ENCODE measurements at regions of chr17 and their contacts with region 1.

Region 1: DNA sequence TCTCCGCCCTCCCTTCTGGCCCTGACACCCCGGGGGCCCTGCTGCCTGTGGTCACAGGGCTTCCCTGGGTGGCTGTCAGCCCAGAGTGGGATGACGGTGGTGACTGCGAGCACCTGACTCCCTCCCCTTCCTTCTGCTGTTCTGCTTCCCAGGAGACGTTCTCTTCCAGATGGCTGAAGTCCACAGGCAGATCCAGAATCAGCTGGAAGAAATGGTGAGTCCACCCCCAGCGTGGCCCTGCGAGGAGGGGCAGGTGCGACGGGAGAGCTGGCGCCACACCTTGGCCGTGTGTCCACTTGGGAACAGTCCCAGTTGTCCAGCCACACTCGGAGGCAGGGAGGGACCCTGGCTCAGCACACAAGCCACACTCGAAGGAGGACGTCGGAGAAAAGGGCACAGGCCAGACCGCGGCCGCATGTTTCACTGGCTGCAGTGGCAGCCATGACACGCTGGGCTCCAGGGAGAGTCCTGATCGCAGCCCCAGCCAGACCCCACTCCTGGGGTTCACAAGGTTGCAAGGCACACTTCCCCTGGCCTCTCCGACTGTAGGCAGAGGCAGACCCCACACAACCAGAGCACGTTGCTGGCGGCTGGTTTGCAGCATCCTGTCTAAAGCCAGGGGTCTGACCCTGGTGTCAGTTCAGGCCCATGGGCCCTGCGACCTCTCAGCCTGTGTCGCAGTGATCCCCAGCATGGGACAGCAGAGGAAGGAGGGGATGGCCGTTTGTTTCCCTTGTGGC is 49.9 kb downstream of the BAIAP2 start:
- DNase-seq: no peak
- ATAC-seq: no peak
- H3K4me3 ChIP-seq: no peak overlapping the region
- H3K4me3 Mint-ChIP-seq: no peak overlapping the region
- H3K27ac ChIP-seq: no peak overlapping the region
- H3K27ac Mint-ChIP-seq: no peak overlapping the region
- H3K4me1 ChIP-seq: peaks cover 29% of the 10 kb centered on the region
- H3K4me1 Mint-ChIP-seq: no peaks in the 10 kb centered on the region
- H3K27me3 ChIP-seq: no peaks in the 10 kb centered on the region
- H3K27me3 Mint-ChIP-seq: no peaks in the 10 kb centered on the region
- CTCF ChIP-seq: no peak

Region 2: GRCh38 chr17:81018044-81018802 is 66.6 kb before region 1 on chr17:
- CTCF ChIA-PET with region 1: no interaction called
- POLR2A ChIA-PET with region 1: no interaction called
- intact Hi-C with region 1: no loop called
- DNase-seq: peak in 12 of 14 experiments; percentile 22 to 73 (median 38)
- ATAC-seq: peak; percentile 88
- H3K4me3 ChIP-seq: peak overlapping the region; percentile 60
- H3K4me3 Mint-ChIP-seq: peak overlapping the region; percentile 84
- H3K27ac ChIP-seq: peak overlapping the region; percentile 56 to 81
- H3K27ac Mint-ChIP-seq: peak overlapping the region; percentile 93
- H3K4me1 ChIP-seq: peaks cover 34% of the 10 kb centered on the region
- H3K4me1 Mint-ChIP-seq: peaks cover 26% of the 10 kb centered on the region
- H3K27me3 ChIP-seq: no peaks in the 10 kb centered on the region
- H3K27me3 Mint-ChIP-seq: no peaks in the 10 kb centered on the region
- CTCF ChIP-seq: no peak

Region 3: GRCh38 chr17:81044764-81045589 is 39.9 kb before region 1 on chr17:
- CTCF ChIA-PET with region 1: no interaction called
- POLR2A ChIA-PET with region 1: no interaction called
- intact Hi-C with region 1: loop called in 1 of 2 experiments (anchors 5 kb)
- DNase-seq: no peak
- ATAC-seq: no peak
- H3K4me3 ChIP-seq: no peak overlapping the region
- H3K4me3 Mint-ChIP-seq: no peak overlapping the region
- H3K27ac ChIP-seq: no peak overlapping the region
- H3K27ac Mint-ChIP-seq: no peak overlapping the region
- H3K4me1 ChIP-seq: peaks cover 14% of the 10 kb centered on the region
- H3K4me1 Mint-ChIP-seq: peaks cover 8% of the 10 kb centered on the region
- H3K27me3 ChIP-seq: no peaks in the 10 kb centered on the region
- H3K27me3 Mint-ChIP-seq: no peaks in the 10 kb centered on the region
- CTCF ChIP-seq: no peak

Measured in CD4-positive, alpha-beta T cell (primary cell).